GM12878 (cell line): ENCODE measurements at regions of chr18 and their contacts with region 1.

Region 1: DNA sequence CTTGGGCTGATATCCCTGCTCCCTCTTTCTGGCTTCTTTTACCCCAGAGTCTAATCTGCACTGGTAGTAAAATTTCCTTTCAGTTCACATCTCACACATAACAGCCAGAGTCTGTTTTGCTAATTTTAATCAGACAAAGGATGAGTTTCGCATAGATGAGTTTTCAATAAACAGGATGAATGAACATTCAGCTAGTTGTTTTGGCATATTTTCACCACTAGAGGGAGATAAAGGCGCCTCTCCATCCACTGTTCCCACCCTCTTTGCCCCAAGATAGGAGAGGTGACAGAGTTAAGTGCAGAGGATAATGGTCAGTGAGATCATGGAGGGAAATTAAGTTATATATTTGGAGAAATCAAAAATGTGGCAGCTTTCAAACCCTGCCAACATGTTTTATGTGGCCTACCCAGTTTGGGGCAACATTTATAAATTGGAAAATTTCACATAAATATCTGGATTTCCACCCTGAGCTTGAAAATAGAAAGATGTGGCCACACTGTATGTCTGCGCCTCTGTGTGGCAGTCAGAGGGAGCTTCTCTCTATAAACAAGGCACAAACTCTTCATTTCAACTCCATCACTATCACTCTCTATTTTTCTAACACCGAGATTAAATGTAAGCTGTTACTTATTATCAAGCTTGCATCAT is 48.5 kb upstream of the DTNA start:
- DNase-seq: no peak
- ATAC-seq: peak; percentile 90
- H3K4me3 ChIP-seq: no peak overlapping the region
- H3K27ac ChIP-seq: no peak overlapping the region
- H3K4me1 ChIP-seq: no peaks in the 10 kb centered on the region
- H3K27me3 ChIP-seq: no peaks in the 10 kb centered on the region; a peak in 1 of 4 replicates
- CTCF ChIP-seq: peak; percentile 69 to 76 (median 75)
- EP300 ChIP-seq: no peak
- POLR2A ChIP-seq: no peak
- RAD21 ChIP-seq: peak; percentile 56

Region 2: DNA sequence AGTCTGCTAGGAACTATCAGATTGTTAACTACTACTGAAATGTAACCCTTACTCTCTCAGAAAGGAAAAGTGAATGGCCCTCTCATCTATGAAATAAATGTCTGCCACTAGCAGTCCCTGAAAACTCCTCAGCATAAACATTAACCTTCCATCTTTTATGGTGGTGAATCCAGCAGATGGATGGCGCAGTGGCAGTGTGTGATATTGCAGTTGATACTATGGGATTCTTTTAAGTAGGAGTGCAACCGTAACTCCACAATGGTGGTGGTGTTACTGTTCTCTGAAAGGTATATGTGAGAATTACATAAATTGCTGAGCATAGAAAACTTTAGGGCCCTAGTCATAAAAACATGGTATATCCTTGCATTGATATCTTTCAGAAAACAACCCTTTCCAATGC is 149.2 kb before region 1 on chr18:
- CTCF ChIA-PET with region 1: interaction called, 7 read pairs
- POLR2A ChIA-PET with region 1: no interaction called
- RAD21 ChIA-PET with region 1: interaction called, 11 read pairs
- SMC1A ChIA-PET with region 1: interaction called, 4 read pairs
- in situ Hi-C with region 1: no loop called
- intact Hi-C with region 1: no loop called
- DNase-seq: no peak
- ATAC-seq: 0 out of 3 replicates have a peak, but pooled peaks have one; percentile 18
- H3K4me3 ChIP-seq: no peak overlapping the region
- H3K27ac ChIP-seq: no peak overlapping the region
- H3K4me1 ChIP-seq: no peaks in the 10 kb centered on the region
- H3K27me3 ChIP-seq: no peaks in the 10 kb centered on the region
- CTCF ChIP-seq: no peak
- EP300 ChIP-seq: no peak
- POLR2A ChIP-seq: no peak
- RAD21 ChIP-seq: no peak

Region 3: GRCh38 chr18:34639687-34640086 is 21.9 kb before region 1 on chr18:
- CTCF ChIA-PET with region 1: interaction called, 48 read pairs
- POLR2A ChIA-PET with region 1: no interaction called
- RAD21 ChIA-PET with region 1: interaction called, 3 read pairs
- SMC1A ChIA-PET with region 1: interaction called, 4 read pairs
- in situ Hi-C with region 1: no loop called
- intact Hi-C with region 1: no loop called
- DNase-seq: no peak
- ATAC-seq: no peak
- H3K4me3 ChIP-seq: no peak overlapping the region
- H3K27ac ChIP-seq: no peak overlapping the region
- H3K4me1 ChIP-seq: no peaks in the 10 kb centered on the region
- H3K27me3 ChIP-seq: no peaks in the 10 kb centered on the region
- CTCF ChIP-seq: no peak
- EP300 ChIP-seq: no peak
- POLR2A ChIP-seq: no peak
- RAD21 ChIP-seq: no peak

Region 4: DNA sequence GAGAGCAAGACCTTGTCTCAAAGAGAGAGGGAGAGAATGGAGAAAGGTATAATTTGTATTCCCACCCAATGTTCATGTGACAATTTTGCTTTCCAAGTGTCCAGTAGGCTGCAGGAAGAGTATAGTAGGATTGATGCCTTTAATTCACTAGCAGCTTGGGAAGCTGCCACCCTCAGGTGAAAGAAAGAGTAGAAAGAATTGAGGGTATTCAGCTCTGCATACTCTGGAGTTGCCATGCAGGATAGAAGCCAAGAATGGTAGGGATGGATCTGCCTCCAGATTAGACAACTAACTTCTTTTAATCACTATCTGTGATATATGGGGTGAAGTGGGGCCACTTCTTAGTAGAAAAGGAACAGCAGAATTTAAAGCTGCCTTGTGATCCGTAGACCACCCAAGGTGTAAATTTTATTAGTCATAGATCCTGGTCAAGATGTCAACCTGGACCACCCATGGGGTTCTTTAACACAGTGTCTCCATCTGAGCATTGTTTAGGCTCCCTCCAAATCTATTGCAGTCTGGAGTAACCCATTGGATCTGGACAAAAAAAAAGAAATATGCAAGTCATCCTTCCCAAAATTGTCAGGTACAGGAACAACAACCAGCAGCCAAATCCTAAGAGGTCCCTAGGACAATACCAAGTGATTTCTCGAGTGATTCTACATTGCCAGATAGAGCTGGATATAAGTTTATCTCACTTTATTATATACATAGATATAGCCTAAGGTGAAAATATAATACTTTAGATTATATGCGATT is 15.4 kb after region 1 on chr18:
- CTCF ChIA-PET with region 1: interaction called, 91 read pairs
- POLR2A ChIA-PET with region 1: no interaction called
- RAD21 ChIA-PET with region 1: interaction called, 16 read pairs
- SMC1A ChIA-PET with region 1: interaction called, 61 read pairs
- in situ Hi-C with region 1: no loop called
- intact Hi-C with region 1: no loop called
- DNase-seq: no peak
- ATAC-seq: no peak
- H3K4me3 ChIP-seq: no peak overlapping the region
- H3K27ac ChIP-seq: no peak overlapping the region
- H3K4me1 ChIP-seq: no peaks in the 10 kb centered on the region
- H3K27me3 ChIP-seq: no peaks in the 10 kb centered on the region
- CTCF ChIP-seq: no peak
- EP300 ChIP-seq: no peak
- POLR2A ChIP-seq: no peak
- RAD21 ChIP-seq: no peak

Region 5: GRCh38 chr18:34707670-34708069 is 46.1 kb after region 1 on chr18:
- CTCF ChIA-PET with region 1: interaction called, 23 read pairs
- POLR2A ChIA-PET with region 1: no interaction called
- RAD21 ChIA-PET with region 1: interaction called, 3 read pairs
- SMC1A ChIA-PET with region 1: interaction called, 14 read pairs
- in situ Hi-C with region 1: no loop called
- intact Hi-C with region 1: no loop called
- DNase-seq: no peak
- ATAC-seq: no peak
- H3K4me3 ChIP-seq: no peak overlapping the region
- H3K27ac ChIP-seq: no peak overlapping the region
- H3K4me1 ChIP-seq: no peaks in the 10 kb centered on the region
- H3K27me3 ChIP-seq: peaks cover 0 to 3% of the 10 kb centered on the region in 2 experiments; a peak in 1 of 4 replicates
- CTCF ChIP-seq: no peak
- EP300 ChIP-seq: no peak
- POLR2A ChIP-seq: no peak
- RAD21 ChIP-seq: no peak

Region 6: DNA sequence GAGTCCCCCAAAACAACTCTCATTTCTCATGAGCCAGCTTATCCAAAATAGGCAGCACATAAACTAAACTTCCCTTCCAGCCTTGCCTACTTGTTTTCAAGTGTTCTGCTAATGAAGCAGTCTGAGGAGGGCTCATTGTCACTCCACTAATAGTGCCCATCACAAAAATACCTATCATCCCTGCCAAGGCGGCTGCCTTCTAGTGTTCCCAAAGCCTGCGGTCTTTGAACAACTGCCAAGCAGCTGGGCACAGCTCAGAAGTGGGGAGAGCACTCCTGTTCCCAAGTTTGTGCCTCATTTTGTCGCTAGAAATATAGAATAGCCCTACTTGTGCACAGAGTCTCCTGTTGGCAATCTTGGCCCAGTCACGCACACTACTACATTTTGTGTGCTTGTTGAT is 98.9 kb after region 1 on chr18:
- CTCF ChIA-PET with region 1: interaction called, 21 read pairs
- POLR2A ChIA-PET with region 1: no interaction called
- RAD21 ChIA-PET with region 1: interaction called, 4 read pairs
- SMC1A ChIA-PET with region 1: interaction called, 13 read pairs
- in situ Hi-C with region 1: no loop called
- intact Hi-C with region 1: no loop called
- DNase-seq: no peak
- ATAC-seq: no peak
- H3K4me3 ChIP-seq: no peak overlapping the region
- H3K27ac ChIP-seq: no peak overlapping the region
- H3K4me1 ChIP-seq: no peaks in the 10 kb centered on the region
- H3K27me3 ChIP-seq: no peaks in the 10 kb centered on the region
- CTCF ChIP-seq: no peak
- EP300 ChIP-seq: no peak
- POLR2A ChIP-seq: no peak
- RAD21 ChIP-seq: no peak

Region 7: GRCh38 chr18:34787931-34788532 is 126.4 kb after region 1 on chr18:
- CTCF ChIA-PET with region 1: interaction called, 193 read pairs
- POLR2A ChIA-PET with region 1: no interaction called
- RAD21 ChIA-PET with region 1: interaction called, 107 read pairs
- SMC1A ChIA-PET with region 1: interaction called, 134 read pairs
- in situ Hi-C with region 1: loop called (anchors 10 kb)
- intact Hi-C with region 1: loop called (anchors 1 kb)
- DNase-seq: peak; percentile 11
- ATAC-seq: peak; percentile 79
- H3K4me3 ChIP-seq: no peak overlapping the region
- H3K27ac ChIP-seq: no peak overlapping the region
- H3K4me1 ChIP-seq: no peaks in the 10 kb centered on the region
- H3K27me3 ChIP-seq: no peaks in the 10 kb centered on the region; a peak in 1 of 4 replicates
- CTCF ChIP-seq: peak; percentile 43 to 70 (median 58); a peak in 5 of 6 replicates
- EP300 ChIP-seq: no peak
- POLR2A ChIP-seq: no peak
- RAD21 ChIP-seq: peak; percentile 81

Region 8: GRCh38 chr18:34965108-34965507 is 303.5 kb after region 1 on chr18:
- CTCF ChIA-PET with region 1: no interaction called
- POLR2A ChIA-PET with region 1: no interaction called
- RAD21 ChIA-PET with region 1: no interaction called
- SMC1A ChIA-PET with region 1: no interaction called
- in situ Hi-C with region 1: no loop called
- intact Hi-C with region 1: no loop called
- DNase-seq: no peak
- ATAC-seq: no peak
- H3K4me3 ChIP-seq: no peak overlapping the region
- H3K27ac ChIP-seq: no peak overlapping the region
- H3K4me1 ChIP-seq: no peaks in the 10 kb centered on the region
- H3K27me3 ChIP-seq: no peaks in the 10 kb centered on the region; a peak in 1 of 4 replicates
- CTCF ChIP-seq: no peak
- EP300 ChIP-seq: no peak
- POLR2A ChIP-seq: no peak
- RAD21 ChIP-seq: no peak